IMR-90 (cell line): ENCODE measurements at regions of chr18 and their contacts with region 1.

Region 1: GRCh38 chr18:22169007-22169864 is at the start of gene GATA6:
- DNase-seq: peak; percentile 91
- ATAC-seq: peak; percentile 78
- H3K4me3 ChIP-seq: peak within 1 kb of the TSS; percentile 77
- H3K27ac ChIP-seq: peak within 1 kb of the TSS; percentile 75
- H3K4me1 ChIP-seq: peaks cover 12% of the 10 kb centered on the region
- H3K27me3 ChIP-seq: peaks cover 45% of the 10 kb centered on the region
- CTCF ChIP-seq: peak; percentile 65
- POLR2A ChIP-seq: peak; percentile 98
- RAD21 ChIP-seq: peak; percentile 59
- total RNA-seq, gene GATA6: 2.5 and 3.3 TPM in 2 replicates

Region 2: GRCh38 chr18:22314420-22314819 is 145.2 kb after region 1 on chr18:
- CTCF ChIA-PET with region 1: interaction called, 4 read pairs
- POLR2A ChIA-PET with region 1: no interaction called
- dilution Hi-C with region 1: no loop called
- in situ Hi-C with region 1: no loop called
- intact Hi-C with region 1: loop called (anchors 2 kb)
- DNase-seq: peak; percentile 97
- ATAC-seq: peak; percentile 96
- H3K4me3 ChIP-seq: peak overlapping the region; percentile 12; the same call in 1 of the 2 replicates
- H3K27ac ChIP-seq: peak overlapping the region; percentile 85
- H3K4me1 ChIP-seq: peaks cover 12% of the 10 kb centered on the region
- H3K27me3 ChIP-seq: no peaks in the 10 kb centered on the region
- CTCF ChIP-seq: no peak
- POLR2A ChIP-seq: no peak; the same call in 1 of the 2 replicates
- RAD21 ChIP-seq: peak; percentile 32

Region 3: GRCh38 chr18:22363867-22364463 is 194.7 kb after region 1 on chr18:
- CTCF ChIA-PET with region 1: no interaction called
- POLR2A ChIA-PET with region 1: no interaction called
- dilution Hi-C with region 1: no loop called
- in situ Hi-C with region 1: no loop called
- intact Hi-C with region 1: loop called (anchors 5 kb)
- DNase-seq: peak; percentile 29
- ATAC-seq: no peak
- H3K4me3 ChIP-seq: no peak overlapping the region
- H3K27ac ChIP-seq: no peak overlapping the region
- H3K4me1 ChIP-seq: no peaks in the 10 kb centered on the region
- H3K27me3 ChIP-seq: peaks cover 21% of the 10 kb centered on the region
- CTCF ChIP-seq: peak; percentile 30; the same call in 1 of the 2 replicates
- POLR2A ChIP-seq: no peak
- RAD21 ChIP-seq: peak; percentile 40

Region 4: DNA sequence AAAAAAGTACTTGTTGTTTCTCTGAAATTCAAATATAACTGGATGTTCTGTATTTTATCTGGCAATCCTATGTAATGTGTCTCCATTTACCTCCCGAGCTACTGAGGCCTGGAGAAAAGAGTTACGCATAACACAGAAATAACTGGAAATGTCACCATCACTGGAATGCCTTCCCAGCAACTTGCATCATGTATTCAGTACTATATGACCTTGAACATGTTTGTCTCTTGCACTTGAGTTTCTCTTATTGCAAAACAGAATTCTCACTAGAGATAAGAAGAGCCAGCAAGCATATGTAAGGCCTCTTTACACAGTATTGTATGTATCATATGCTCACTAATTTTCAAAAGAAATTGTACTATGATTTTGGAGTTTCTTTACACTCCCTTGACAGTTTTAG is 348.1 kb after region 1 on chr18:
- CTCF ChIA-PET with region 1: no interaction called
- POLR2A ChIA-PET with region 1: no interaction called
- dilution Hi-C with region 1: no loop called
- in situ Hi-C with region 1: no loop called
- intact Hi-C with region 1: no loop called
- DNase-seq: no peak
- ATAC-seq: no peak
- H3K4me3 ChIP-seq: no peak overlapping the region
- H3K27ac ChIP-seq: no peak overlapping the region
- H3K4me1 ChIP-seq: no peaks in the 10 kb centered on the region
- H3K27me3 ChIP-seq: no peaks in the 10 kb centered on the region
- CTCF ChIP-seq: no peak
- POLR2A ChIP-seq: no peak
- RAD21 ChIP-seq: no peak

Region 5: GRCh38 chr18:22703883-22704585 is 534.8 kb after region 1 on chr18:
- CTCF ChIA-PET with region 1: no interaction called
- POLR2A ChIA-PET with region 1: no interaction called
- dilution Hi-C with region 1: no loop called
- in situ Hi-C with region 1: no loop called
- intact Hi-C with region 1: loop called (anchors 5 kb)
- DNase-seq: peak; percentile 40
- ATAC-seq: peak; percentile 27; the same call in 1 of the 2 replicates
- H3K4me3 ChIP-seq: no peak overlapping the region
- H3K27ac ChIP-seq: no peak overlapping the region
- H3K4me1 ChIP-seq: peaks cover 3% of the 10 kb centered on the region; the same call in 1 of the 2 replicates
- H3K27me3 ChIP-seq: no peaks in the 10 kb centered on the region
- CTCF ChIP-seq: peak; percentile 53
- POLR2A ChIP-seq: no peak
- RAD21 ChIP-seq: peak; percentile 51